ENCODE measurements at regions of chr3 and their contacts with region 1.

Region 1: DNA sequence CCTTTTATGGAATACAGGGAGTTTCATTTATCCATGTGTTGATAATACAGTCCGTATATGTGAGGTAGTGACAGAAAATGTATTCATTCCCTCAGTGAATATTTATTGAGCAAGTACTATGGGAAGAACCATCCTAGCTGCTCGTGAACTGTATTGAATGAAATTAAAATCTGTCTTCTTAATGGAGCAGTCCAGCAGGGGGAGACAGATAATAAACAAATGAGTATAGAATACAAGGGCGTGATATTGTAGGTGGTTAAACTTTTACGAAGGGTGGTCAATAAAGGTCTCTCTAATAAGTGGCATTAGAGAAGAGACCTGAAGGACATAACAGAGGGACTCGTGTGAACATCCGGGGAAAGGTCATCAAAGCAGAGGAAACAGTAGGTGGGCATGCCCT is 62.7 kb upstream of the OSTN start:
- DNase-seq: peak; percentile 12
- H3K4me3 ChIP-seq: no peak overlapping the region
- H3K27ac ChIP-seq: no peak overlapping the region
- H3K4me1 ChIP-seq: peaks cover 1% of the 10 kb centered on the region
- H3K27me3 ChIP-seq: no peaks in the 10 kb centered on the region
- CTCF ChIP-seq: peak; percentile 37 to 46

Region 2: GRCh38 chr3:191220908-191221307 is 84.6 kb after region 1 on chr3:
- CTCF ChIA-PET with region 1: interaction called, 5 read pairs
- dilution Hi-C with region 1: no loop called
- in situ Hi-C with region 1: no loop called
- intact Hi-C with region 1: loop called (anchors 5 kb)
- DNase-seq: peak; percentile 7
- H3K4me3 ChIP-seq: no peak overlapping the region
- H3K27ac ChIP-seq: no peak overlapping the region
- H3K4me1 ChIP-seq: no peaks in the 10 kb centered on the region
- H3K27me3 ChIP-seq: no peaks in the 10 kb centered on the region
- CTCF ChIP-seq: peak in 1 of 2 donors; percentile 27

Region 3: GRCh38 chr3:191269289-191270085 is 133.1 kb after region 1 on chr3:
- CTCF ChIA-PET with region 1: no interaction called
- dilution Hi-C with region 1: no loop called
- in situ Hi-C with region 1: no loop called
- intact Hi-C with region 1: no loop called
- DNase-seq: no peak
- H3K4me3 ChIP-seq: no peak overlapping the region
- H3K27ac ChIP-seq: no peak overlapping the region
- H3K4me1 ChIP-seq: no peaks in the 10 kb centered on the region
- H3K27me3 ChIP-seq: peaks cover 2% of the 10 kb centered on the region
- CTCF ChIP-seq: no peak

Region 4: DNA sequence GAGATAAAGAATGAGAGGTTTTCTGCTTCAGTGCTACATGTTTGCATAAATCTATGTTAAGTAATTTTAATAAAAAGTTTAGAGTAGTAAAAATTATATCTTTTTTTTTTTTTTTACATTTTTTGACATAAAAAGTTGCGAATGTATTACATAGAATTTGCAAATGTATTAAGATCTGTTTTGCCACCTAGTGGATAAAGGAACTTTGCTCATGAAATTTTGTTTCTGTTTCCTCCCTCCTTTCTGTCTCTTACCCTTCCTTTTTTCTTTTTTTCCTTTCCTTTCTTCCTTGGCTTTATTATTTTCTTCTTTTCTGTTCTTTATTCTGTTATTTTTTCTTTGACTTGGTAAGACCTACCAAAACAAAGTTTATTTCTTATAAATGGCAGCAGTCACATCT is 252.5 kb after region 1 on chr3:
- CTCF ChIA-PET with region 1: no interaction called
- dilution Hi-C with region 1: no loop called
- in situ Hi-C with region 1: no loop called
- intact Hi-C with region 1: loop called (anchors 2 kb)
- DNase-seq: no peak
- H3K4me3 ChIP-seq: no peak overlapping the region
- H3K27ac ChIP-seq: no peak overlapping the region
- H3K4me1 ChIP-seq: no peaks in the 10 kb centered on the region
- H3K27me3 ChIP-seq: no peaks in the 10 kb centered on the region
- CTCF ChIP-seq: peak in 1 of 2 donors; percentile 37